HEK293 (cell line): ENCODE measurements at regions of chr9 and their contacts with region 1.

Region 1: DNA sequence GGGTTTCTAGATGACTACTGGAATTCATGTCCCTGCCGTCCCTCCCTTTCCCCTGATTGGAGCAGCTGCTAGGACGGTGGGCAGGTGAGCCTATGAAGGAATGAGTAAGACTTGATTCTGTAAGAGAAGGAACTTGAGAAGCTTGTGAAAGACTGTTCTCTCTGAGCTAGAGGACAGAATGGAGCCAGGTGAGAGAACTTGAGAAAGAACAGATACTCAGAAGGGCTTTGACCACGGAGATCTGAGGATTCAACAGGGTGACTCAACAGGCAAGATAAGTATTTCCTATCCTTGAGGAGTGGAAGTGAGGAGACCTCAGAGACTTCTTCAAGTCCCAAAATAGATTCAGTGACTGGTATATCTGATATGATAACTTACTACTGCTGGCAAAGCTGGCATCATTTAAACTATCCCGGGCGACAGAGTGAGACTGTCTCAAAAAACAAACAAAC is 41.9 kb downstream of the HSDL2 start:
- H3K4me3 ChIP-seq: no peak overlapping the region
- H3K27ac ChIP-seq: no peak overlapping the region
- H3K4me1 ChIP-seq: no peaks in the 10 kb centered on the region
- CTCF ChIP-seq: no peak

Region 2: GRCh38 chr9:112125951-112126388 is 295.8 kb before region 1 on chr9:
- CTCF ChIA-PET with region 1: no interaction called
- POLR2A ChIA-PET with region 1: no interaction called
- H3K4me3 ChIP-seq: no peak overlapping the region
- H3K27ac ChIP-seq: no peak overlapping the region
- H3K4me1 ChIP-seq: no peaks in the 10 kb centered on the region
- CTCF ChIP-seq: no peak

Region 3: DNA sequence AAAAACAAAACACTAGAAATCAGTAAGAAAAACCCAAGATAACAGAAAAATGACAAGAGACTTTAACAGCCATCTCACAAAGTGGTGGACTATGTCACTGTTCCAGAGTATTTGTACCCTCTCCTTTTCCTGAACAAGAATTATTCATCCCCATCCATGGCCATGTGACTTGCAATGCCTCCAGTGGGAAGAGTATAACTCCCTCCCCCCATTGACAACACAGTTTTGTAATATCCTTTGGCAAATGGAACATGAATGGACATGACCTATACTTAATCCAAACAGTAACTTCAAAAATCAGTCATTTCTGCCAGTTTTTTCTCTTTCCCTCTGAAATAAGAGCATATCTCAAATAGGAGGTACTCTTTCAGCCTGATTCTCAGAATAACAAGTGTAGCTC is 122.3 kb before region 1 on chr9:
- CTCF ChIA-PET with region 1: no interaction called
- POLR2A ChIA-PET with region 1: no interaction called
- H3K4me3 ChIP-seq: no peak overlapping the region
- H3K27ac ChIP-seq: no peak overlapping the region
- H3K4me1 ChIP-seq: peaks cover 4% of the 10 kb centered on the region; the same call in 1 of the 2 replicates
- CTCF ChIP-seq: no peak

Region 4: GRCh38 chr9:112443200-112443599 is 21.4 kb after region 1 on chr9:
- CTCF ChIA-PET with region 1: interaction called, 10 read pairs
- POLR2A ChIA-PET with region 1: no interaction called
- H3K4me3 ChIP-seq: no peak overlapping the region
- H3K27ac ChIP-seq: no peak overlapping the region
- H3K4me1 ChIP-seq: no peaks in the 10 kb centered on the region
- CTCF ChIP-seq: no peak